ENCODE measurements at regions of chr2 and their contacts with region 1.

Region 1: GRCh38 chr2:46847235-46848068 is 68.2 kb downstream of the MCFD2 start:
- DNase-seq: peak; percentile 95
- H3K4me3 ChIP-seq: no peak overlapping the region
- H3K27ac ChIP-seq: peak overlapping the region; percentile 66 to 72
- H3K4me1 ChIP-seq: peaks cover 10% of the 10 kb centered on the region
- H3K27me3 ChIP-seq: no peaks in the 10 kb centered on the region
- CTCF ChIP-seq: no peak
- POLR2A ChIP-seq: no peak

Region 2: DNA sequence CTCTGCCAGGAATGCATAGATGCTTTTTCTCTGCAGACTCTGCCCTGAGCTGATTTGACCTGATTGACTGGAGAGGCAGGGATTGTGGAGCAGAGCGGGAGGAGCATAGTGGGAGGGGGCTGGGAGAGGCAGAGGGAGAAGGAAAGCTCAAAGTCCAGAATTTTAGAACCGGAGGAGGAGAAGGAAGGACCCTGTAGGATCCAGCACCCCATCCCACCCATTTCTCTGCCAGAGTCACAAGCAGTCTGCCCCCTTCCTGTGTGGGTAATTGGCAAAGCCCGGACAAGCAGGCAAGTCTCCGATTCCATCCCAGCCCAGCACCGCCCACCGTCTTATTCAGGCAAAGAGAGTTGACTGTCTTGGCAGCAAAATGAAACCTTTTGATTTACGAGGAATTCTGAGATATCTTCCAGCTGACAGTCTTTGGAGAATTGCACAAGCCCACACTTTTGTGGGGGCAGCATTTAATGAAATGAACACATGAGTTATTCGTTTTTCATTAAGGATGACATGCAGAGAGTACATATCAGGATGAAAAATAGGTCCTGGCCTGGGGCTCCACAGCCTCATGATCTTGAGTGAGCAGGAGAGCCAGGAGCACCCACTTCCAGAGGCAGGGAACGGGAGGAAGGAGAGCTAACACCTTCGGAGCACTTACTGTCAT is 35.0 kb before region 1 on chr2:
- intact Hi-C with region 1: loop called (anchors 2 kb)
- DNase-seq: peak; percentile 36
- H3K4me3 ChIP-seq: no peak overlapping the region
- H3K27ac ChIP-seq: peak overlapping the region; percentile 44 to 71
- H3K4me1 ChIP-seq: peaks cover 10% of the 10 kb centered on the region
- H3K27me3 ChIP-seq: no peaks in the 10 kb centered on the region
- CTCF ChIP-seq: no peak
- POLR2A ChIP-seq: no peak

Region 3: GRCh38 chr2:47493317-47494035 is 646.0 kb after region 1 on chr2:
- intact Hi-C with region 1: no loop called
- DNase-seq: no peak
- H3K4me3 ChIP-seq: no peak overlapping the region
- H3K27ac ChIP-seq: no peak overlapping the region
- H3K4me1 ChIP-seq: no peaks in the 10 kb centered on the region
- H3K27me3 ChIP-seq: no peaks in the 10 kb centered on the region
- CTCF ChIP-seq: no peak
- POLR2A ChIP-seq: no peak